ENCODE measurements at regions of chr9 and their contacts with region 1.

Region 1: DNA sequence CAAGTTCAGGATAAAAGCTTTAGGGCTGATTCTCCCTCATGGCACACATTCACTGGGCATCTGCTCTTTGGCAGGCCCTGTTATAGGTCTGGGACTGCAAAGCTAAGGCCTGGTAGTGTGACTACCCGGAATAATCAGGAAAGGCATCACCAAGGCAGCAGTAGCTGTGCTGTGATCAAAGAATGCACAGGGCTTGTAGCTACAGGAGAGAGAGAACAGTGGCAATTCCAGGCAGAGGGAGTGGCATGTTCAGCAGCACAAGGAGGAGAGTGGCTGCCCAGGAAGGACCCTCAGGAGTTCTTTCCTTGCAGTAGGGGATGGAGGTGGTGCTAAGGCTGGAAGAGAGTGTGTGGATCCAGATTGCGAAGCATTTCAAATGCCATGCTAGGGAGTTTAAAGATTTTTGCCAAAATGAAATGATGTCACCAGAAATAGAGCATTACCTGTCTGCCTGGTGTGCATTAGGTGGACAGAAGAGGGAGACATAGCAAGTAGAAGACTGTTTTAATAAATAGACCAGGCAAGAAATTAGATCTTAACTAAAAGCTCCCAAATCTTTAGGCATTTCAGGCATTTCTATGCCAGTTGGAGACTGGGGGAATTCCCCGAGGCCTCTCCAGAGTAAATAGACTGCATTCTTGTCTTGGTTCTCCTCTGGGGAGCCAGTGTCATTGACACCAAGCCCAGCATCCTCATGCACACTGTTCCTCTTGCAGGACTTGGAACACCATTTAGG is 69.1 kb downstream of the GPR21 start:
- DNase-seq: peak; percentile 48
- H3K4me3 ChIP-seq: no peak overlapping the region
- H3K27ac ChIP-seq: no peak overlapping the region
- H3K4me1 ChIP-seq: peaks cover 20% of the 10 kb centered on the region
- CTCF ChIP-seq: peak; percentile 85

Region 2: GRCh38 chr9:123091459-123091858 is 11.1 kb before region 1 on chr9:
- CTCF ChIA-PET with region 1: interaction called, 6 read pairs
- POLR2A ChIA-PET with region 1: interaction called, 10 read pairs
- intact Hi-C with region 1: no loop called
- DNase-seq: peak; percentile 51
- H3K4me3 ChIP-seq: no peak overlapping the region
- H3K27ac ChIP-seq: peak overlapping the region; percentile 60
- H3K4me1 ChIP-seq: peaks cover 80% of the 10 kb centered on the region
- CTCF ChIP-seq: peak; percentile 88